A673 (cell line): ENCODE measurements at regions of chr11 and their contacts with region 1.

Region 1: DNA sequence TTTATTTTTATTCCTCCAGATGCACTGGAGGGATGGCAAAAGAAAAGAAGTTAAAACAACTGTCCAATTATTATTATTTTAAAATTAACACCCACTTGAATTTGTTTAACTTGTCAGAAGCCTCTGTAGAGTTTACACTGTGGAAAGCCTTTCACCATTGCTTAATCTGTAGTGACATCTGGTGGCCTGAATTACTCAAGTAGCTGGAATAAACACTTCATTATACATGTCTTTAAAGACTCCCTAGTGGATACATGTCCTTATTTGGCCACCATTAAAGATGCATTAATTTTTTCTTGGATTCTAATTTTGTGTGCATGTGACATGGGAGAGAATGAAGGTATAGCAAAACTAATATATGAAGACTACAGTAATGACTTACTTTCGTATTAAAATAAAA is 1496.5 kb downstream of the FAM181B start:
- DNase-seq: peak; percentile 91
- H3K4me3 ChIP-seq: no peak overlapping the region
- H3K27ac ChIP-seq: no peak overlapping the region
- H3K4me1 ChIP-seq: peaks cover 9% of the 10 kb centered on the region
- H3K27me3 ChIP-seq: no peaks in the 10 kb centered on the region
- CTCF ChIP-seq: peak; percentile 83

Region 2: GRCh38 chr11:79762279-79762921 is 1474.7 kb before region 1 on chr11:
- CTCF ChIA-PET with region 1: no interaction called
- POLR2A ChIA-PET with region 1: no interaction called
- intact Hi-C with region 1: loop called (anchors 5 kb)
- DNase-seq: peak; percentile 43
- H3K4me3 ChIP-seq: no peak overlapping the region
- H3K27ac ChIP-seq: no peak overlapping the region
- H3K4me1 ChIP-seq: no peaks in the 10 kb centered on the region
- H3K27me3 ChIP-seq: no peaks in the 10 kb centered on the region
- CTCF ChIP-seq: 0 out of 2 replicates have a peak, but pooled peaks have one; percentile 10

Region 3: GRCh38 chr11:80320765-80321164 is 916.4 kb before region 1 on chr11:
- CTCF ChIA-PET with region 1: no interaction called
- POLR2A ChIA-PET with region 1: no interaction called
- intact Hi-C with region 1: loop called (anchors 10 kb)
- DNase-seq: peak; percentile 38
- H3K4me3 ChIP-seq: peak overlapping the region; percentile 23
- H3K27ac ChIP-seq: no peak overlapping the region
- H3K4me1 ChIP-seq: no peaks in the 10 kb centered on the region
- H3K27me3 ChIP-seq: no peaks in the 10 kb centered on the region
- CTCF ChIP-seq: peak; percentile 61

Region 4: DNA sequence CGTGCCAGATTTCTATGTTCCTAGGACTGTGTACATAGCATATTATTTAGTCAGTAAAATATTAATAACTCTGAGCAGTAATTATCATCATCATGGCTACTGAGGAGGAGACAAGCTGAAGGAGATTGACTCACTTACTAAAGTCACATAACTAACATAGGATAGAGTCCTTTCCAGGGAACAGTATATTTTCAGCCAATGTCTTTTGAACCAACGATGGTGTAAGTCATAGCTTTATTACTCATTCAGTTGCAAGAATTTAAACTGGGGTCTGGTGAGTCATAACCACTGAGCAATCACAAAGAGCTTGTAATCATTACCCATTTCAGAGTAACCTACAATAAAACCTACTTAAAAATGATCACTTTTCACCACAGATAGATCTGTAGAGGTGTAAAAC is 231.5 kb before region 1 on chr11:
- CTCF ChIA-PET with region 1: no interaction called
- POLR2A ChIA-PET with region 1: no interaction called
- intact Hi-C with region 1: loop called (anchors 5 kb)
- DNase-seq: peak; percentile 66
- H3K4me3 ChIP-seq: no peak overlapping the region
- H3K27ac ChIP-seq: no peak overlapping the region
- H3K4me1 ChIP-seq: peaks cover 10% of the 10 kb centered on the region
- H3K27me3 ChIP-seq: no peaks in the 10 kb centered on the region
- CTCF ChIP-seq: no peak

Region 5: GRCh38 chr11:81444297-81444696 is 207.2 kb after region 1 on chr11:
- CTCF ChIA-PET with region 1: no interaction called
- POLR2A ChIA-PET with region 1: no interaction called
- intact Hi-C with region 1: loop called (anchors 5 kb)
- DNase-seq: peak; percentile 40
- H3K4me3 ChIP-seq: no peak overlapping the region
- H3K27ac ChIP-seq: no peak overlapping the region
- H3K4me1 ChIP-seq: no peaks in the 10 kb centered on the region
- H3K27me3 ChIP-seq: no peaks in the 10 kb centered on the region
- CTCF ChIP-seq: peak; percentile 60

Region 6: GRCh38 chr11:81899156-81899555 is 662.0 kb after region 1 on chr11:
- CTCF ChIA-PET with region 1: no interaction called
- POLR2A ChIA-PET with region 1: no interaction called
- intact Hi-C with region 1: no loop called
- DNase-seq: no peak
- H3K4me3 ChIP-seq: no peak overlapping the region
- H3K27ac ChIP-seq: no peak overlapping the region
- H3K4me1 ChIP-seq: peaks cover 4% of the 10 kb centered on the region
- H3K27me3 ChIP-seq: no peaks in the 10 kb centered on the region
- CTCF ChIP-seq: no peak